ENCODE measurements at regions of chrX and their contacts with region 1.

Region 1: DNA sequence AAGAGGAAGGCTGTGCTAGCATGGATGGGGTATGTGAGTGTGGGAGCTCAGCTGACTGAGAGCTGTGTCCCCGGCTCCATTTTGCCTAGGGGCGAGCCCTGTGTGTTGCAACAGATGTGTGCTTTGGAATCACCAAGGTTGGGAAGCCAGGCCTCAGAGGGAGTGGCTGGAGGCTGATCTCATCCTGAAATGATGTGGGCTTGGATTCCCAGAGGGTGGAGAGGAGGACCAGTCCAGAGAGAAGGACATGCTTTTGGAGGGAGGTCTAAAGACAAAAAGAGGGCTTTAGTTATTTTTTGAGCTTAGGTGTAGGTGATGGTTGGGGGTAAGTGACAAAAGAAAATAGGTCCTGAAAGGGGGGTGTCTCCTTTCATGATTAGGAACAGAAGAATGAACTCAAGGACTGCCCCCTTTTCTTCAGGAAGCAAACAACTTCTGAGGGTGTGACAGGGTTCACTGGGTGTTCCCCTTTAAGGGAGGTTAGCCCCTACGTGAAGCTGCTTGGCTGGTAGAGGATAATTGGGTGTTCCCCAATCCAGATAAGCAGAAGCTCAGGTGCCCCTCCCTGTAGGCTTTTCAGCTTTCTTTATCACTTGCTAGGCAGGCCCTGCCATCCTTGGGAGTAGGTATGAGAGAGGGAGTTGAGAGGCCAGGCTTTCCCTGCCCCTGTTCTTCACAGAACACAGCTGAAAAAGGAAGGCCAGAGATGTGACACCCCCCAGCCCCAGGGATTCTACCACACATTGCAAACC is 44.0 kb downstream of the RTL9 start:
- DNase-seq: no peak
- H3K4me3 ChIP-seq: no peak overlapping the region
- H3K27ac ChIP-seq: no peak overlapping the region
- H3K4me1 ChIP-seq: no peaks in the 10 kb centered on the region; a peak in 1 of 4 replicates
- H3K27me3 ChIP-seq: no peaks in the 10 kb centered on the region
- CTCF ChIP-seq: no peak
- EP300 ChIP-seq: no peak
- RAD21 ChIP-seq: no peak

Region 2: GRCh38 chrX:110156167-110156754 is 246.4 kb before region 1 on chrX:
- CTCF ChIA-PET with region 1: interaction called, 315 read pairs
- POLR2A ChIA-PET with region 1: no interaction called
- DNase-seq: no peak
- H3K4me3 ChIP-seq: no peak overlapping the region
- H3K27ac ChIP-seq: no peak overlapping the region
- H3K4me1 ChIP-seq: no peaks in the 10 kb centered on the region
- H3K27me3 ChIP-seq: no peaks in the 10 kb centered on the region
- CTCF ChIP-seq: peak; percentile 64
- EP300 ChIP-seq: no peak
- RAD21 ChIP-seq: peak; percentile 38; the same call in 1 of the 2 replicates

Region 3: DNA sequence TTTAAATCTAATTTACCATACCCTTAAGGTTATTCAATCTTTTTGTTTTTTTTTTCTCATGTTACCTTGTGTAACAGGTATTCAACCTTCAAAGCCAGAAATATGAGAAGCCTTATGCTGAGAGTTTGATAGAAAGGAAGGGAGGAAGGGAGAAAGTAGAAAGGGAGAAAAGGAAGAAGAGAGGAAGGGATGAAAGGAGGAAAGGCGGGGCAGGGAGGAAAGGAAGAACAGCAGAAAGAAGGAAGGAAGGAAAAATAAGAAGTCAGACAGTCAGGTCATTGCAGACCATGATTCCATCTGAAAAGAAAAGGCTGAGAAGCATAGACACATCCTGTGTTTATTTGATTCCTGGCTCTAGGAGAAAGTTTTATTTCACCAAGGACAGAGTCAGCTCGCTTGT is 13.1 kb before region 1 on chrX:
- CTCF ChIA-PET with region 1: no interaction called
- POLR2A ChIA-PET with region 1: no interaction called
- DNase-seq: no peak
- H3K4me3 ChIP-seq: no peak overlapping the region
- H3K27ac ChIP-seq: no peak overlapping the region
- H3K4me1 ChIP-seq: no peaks in the 10 kb centered on the region
- H3K27me3 ChIP-seq: no peaks in the 10 kb centered on the region; the same call in 1 of the 2 replicates
- CTCF ChIP-seq: no peak
- EP300 ChIP-seq: no peak
- RAD21 ChIP-seq: no peak

Region 4: GRCh38 chrX:110412971-110413721 is 10.5 kb after region 1 on chrX:
- CTCF ChIA-PET with region 1: interaction called, 15 read pairs
- POLR2A ChIA-PET with region 1: no interaction called
- DNase-seq: peak; percentile 74
- H3K4me3 ChIP-seq: peak overlapping the region; percentile 12 to 17; a peak in 3 of 4 replicates
- H3K27ac ChIP-seq: no peak overlapping the region; a peak in 1 of 4 replicates
- H3K4me1 ChIP-seq: peaks cover 0 to 11% of the 10 kb centered on the region in 2 experiments; a peak in 1 of 4 replicates
- H3K27me3 ChIP-seq: no peaks in the 10 kb centered on the region
- CTCF ChIP-seq: peak; percentile 87
- EP300 ChIP-seq: no peak
- RAD21 ChIP-seq: peak; percentile 72

Measured in SK-N-SH (cell line).